Dendritic cell treated with granulocyte-macrophage colony-stimulating factor and Interleukin-4, amounts not matched to agents 40 ng/mL and 50 ng/mL, for 4 days (primary cell): ENCODE measurements at regions of chr1 and their contacts with region 1.

Region 1: DNA sequence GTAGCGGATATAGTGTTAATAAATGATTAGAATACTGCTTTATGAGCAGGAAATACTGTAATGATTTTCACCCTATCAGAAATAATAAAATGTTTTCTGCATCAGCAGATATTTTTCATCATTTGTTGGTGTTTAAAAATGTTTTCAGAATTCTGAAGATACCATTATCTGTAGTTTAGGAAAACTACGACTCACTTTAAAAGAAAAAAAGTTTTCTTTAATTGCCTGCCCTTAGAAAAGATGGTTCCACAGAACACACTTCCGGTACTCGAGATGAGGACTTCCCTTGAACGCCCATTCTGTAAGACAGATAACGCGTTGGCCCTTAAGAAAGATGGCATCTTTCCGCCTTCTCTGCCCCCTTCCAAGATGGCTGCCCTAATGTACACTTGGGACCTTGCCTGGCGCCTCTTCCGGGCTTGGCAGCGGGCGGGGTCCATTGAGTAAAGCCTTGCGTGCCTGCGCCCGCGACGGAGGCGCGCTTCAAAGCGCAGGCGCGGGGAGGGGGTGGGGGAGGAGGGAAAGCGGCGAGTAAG is at the start of gene SZRD1:
- H3K4me3 Mint-ChIP-seq: peak within 1 kb of the TSS; percentile 98
- H3K27ac Mint-ChIP-seq: peak within 1 kb of the TSS; percentile 99
- H3K4me1 Mint-ChIP-seq: peaks cover 45% of the 10 kb centered on the region
- H3K27me3 Mint-ChIP-seq: no peaks in the 10 kb centered on the region

Region 2: DNA sequence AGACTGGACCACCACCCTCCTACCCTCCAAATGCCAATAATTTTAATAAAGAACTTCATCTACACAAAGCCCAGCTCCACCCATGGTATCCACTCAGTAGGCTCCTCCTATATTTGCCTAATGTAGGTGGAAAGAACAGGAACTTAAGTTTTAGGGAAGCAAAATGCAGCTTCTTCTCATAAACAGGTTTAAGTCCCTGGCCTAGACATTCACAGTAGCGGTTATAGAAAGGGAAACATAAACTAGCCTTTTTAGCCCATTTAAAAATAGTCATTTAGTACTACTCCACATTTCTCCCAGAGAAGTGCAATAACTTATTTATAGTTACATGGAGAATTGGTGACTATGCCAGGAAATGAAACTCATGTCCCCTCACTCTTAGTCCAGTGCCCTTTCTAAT is 73.3 kb before region 1 on chr1:
- intact Hi-C with region 1: loop called (anchors 10 kb)
- H3K4me3 Mint-ChIP-seq: no peak overlapping the region
- H3K27ac Mint-ChIP-seq: peak overlapping the region; percentile 64
- H3K4me1 Mint-ChIP-seq: peaks cover 53% of the 10 kb centered on the region
- H3K27me3 Mint-ChIP-seq: no peaks in the 10 kb centered on the region

Region 3: GRCh38 chr1:16440470-16441281 is 73.9 kb after region 1 on chr1 and contains the start of gene NECAP2:
- intact Hi-C with region 1: loop called (anchors 5 kb)
- H3K4me3 Mint-ChIP-seq: peak within 1 kb of the TSS; percentile 88
- H3K27ac Mint-ChIP-seq: peak within 1 kb of the TSS; percentile 95
- H3K4me1 Mint-ChIP-seq: peaks cover 62% of the 10 kb centered on the region
- H3K27me3 Mint-ChIP-seq: no peaks in the 10 kb centered on the region